HAP-1 (cell line): ENCODE measurements at regions of chr20 and their contacts with region 1.

Region 1: DNA sequence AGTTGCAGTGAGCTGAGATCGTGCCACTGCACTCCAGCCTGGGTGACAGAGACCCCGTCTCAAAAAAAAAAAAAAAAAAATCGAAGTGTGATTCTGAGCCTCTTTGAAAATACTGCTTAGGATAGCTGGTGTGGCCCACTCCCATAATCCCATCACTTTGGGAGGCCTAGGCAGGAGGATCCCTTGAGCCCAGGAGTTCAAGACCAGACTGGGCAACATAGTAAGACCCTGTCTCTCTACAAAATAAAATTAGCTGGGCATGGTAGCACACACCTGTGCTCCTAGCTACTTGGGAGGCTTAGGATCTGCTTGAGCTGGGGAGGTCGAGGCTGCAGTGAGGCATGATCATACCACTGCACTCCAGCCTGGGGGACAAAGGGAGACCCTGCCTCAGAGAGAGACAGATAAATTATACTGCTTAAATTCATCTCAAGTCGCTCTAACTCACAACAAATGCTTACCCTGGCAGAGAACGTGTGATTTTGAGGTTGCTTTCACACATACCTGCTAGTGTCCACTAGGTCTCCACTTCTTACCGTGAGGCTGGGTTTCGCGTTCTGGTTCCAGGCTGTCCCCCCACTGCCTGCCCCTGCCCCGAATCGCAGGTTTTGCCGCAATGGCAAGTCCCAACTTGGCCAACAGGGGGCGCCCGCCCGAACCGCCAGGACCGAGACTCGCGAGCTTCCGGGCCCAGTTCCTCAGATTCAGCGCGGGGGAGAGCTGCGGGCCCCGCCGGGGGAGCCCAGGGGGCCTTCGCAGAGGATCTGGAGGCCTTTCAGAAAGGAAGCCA is 12.3 kb upstream of the TMC2 start:
- DNase-seq: peak; percentile 66 to 94
- H3K4me3 ChIP-seq: peak overlapping the region; percentile 62
- H3K4me1 ChIP-seq: peaks cover 3% of the 10 kb centered on the region; the same call in 1 of the 2 replicates
- H3K27me3 ChIP-seq: no peaks in the 10 kb centered on the region

Region 2: DNA sequence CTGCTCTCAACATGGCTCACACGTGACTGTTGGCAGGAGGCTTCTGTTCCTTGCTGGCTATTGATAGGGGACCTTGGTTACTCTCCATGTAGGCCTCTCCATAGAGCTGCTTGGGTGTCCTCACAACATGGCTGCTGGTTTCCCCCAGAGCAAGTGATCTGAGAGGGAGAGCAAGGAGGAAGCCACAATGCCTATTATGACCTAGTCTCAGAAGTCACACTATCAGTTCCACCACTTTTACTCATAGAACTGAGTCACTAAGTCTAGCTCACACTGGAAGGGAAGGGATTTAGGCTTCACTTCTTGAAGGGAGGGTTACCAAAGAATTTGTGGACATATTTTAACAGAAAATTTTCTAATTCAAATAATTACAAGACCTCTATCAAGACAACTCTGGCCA is 119.6 kb after region 1 on chr20:
- in situ Hi-C with region 1: loop called (anchors 10 kb)
- DNase-seq: no peak
- H3K4me3 ChIP-seq: no peak overlapping the region
- H3K4me1 ChIP-seq: no peaks in the 10 kb centered on the region
- H3K27me3 ChIP-seq: no peaks in the 10 kb centered on the region